ENCODE measurements at regions of chr11 and their contacts with region 1.

Region 1: DNA sequence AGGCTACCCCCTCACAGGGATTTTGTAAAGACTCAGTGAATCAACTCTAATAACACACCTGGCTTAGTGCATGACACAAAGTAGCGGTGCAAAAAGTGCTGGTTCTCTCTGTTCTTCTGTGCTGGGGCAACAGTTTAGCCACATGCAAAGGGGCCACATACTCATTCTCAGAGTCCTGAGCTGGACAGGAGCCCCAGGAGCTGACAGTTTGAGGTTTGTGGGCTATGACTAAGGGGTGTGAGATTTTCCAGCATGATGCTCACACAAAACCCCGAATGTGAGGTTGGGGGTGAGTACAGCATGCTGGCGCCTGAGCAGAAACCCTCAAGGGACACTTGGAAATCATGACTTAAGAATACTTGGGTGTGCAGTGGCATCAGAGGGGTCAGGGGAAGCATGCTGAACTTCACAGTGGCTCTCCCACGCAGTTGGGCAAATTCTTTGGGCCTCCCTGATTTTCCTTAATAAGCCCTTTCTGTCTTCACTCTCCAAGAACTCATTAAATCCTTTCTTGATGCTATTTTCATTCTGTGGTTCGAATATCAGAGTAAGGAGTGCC is 31.0 kb downstream of the TMPRSS5 start:
- DNase-seq: peak; percentile 88
- ATAC-seq: peak; percentile 71
- H3K4me3 ChIP-seq: no peak overlapping the region
- H3K27ac ChIP-seq: no peak overlapping the region
- H3K4me1 ChIP-seq: no peaks in the 10 kb centered on the region; the same call in 1 of the 2 replicates
- H3K27me3 ChIP-seq: peaks cover 15% of the 10 kb centered on the region
- CTCF ChIP-seq: no peak
- POLR2A ChIP-seq: no peak
- RAD21 ChIP-seq: no peak

Region 2: GRCh38 chr11:112150517-112150916 is 1524.6 kb before region 1 on chr11:
- CTCF ChIA-PET with region 1: no interaction called
- POLR2A ChIA-PET with region 1: no interaction called
- dilution Hi-C with region 1: no loop called
- in situ Hi-C with region 1: no loop called
- intact Hi-C with region 1: loop called (anchors 5 kb)
- DNase-seq: no peak
- ATAC-seq: no peak
- H3K4me3 ChIP-seq: no peak overlapping the region
- H3K27ac ChIP-seq: no peak overlapping the region
- H3K4me1 ChIP-seq: no peaks in the 10 kb centered on the region
- H3K27me3 ChIP-seq: no peaks in the 10 kb centered on the region
- CTCF ChIP-seq: no peak
- POLR2A ChIP-seq: no peak
- RAD21 ChIP-seq: no peak

Region 3: GRCh38 chr11:113806406-113806805 is 131.3 kb after region 1 on chr11:
- CTCF ChIA-PET with region 1: no interaction called
- POLR2A ChIA-PET with region 1: no interaction called
- dilution Hi-C with region 1: no loop called
- in situ Hi-C with region 1: no loop called
- intact Hi-C with region 1: no loop called
- DNase-seq: peak; percentile 7
- ATAC-seq: peak; percentile 75
- H3K4me3 ChIP-seq: no peak overlapping the region
- H3K27ac ChIP-seq: no peak overlapping the region
- H3K4me1 ChIP-seq: no peaks in the 10 kb centered on the region
- H3K27me3 ChIP-seq: no peaks in the 10 kb centered on the region
- CTCF ChIP-seq: 0 out of 2 replicates have a peak, but pooled peaks have one; percentile 35
- POLR2A ChIP-seq: no peak
- RAD21 ChIP-seq: 0 out of 2 replicates have a peak, but pooled peaks have one; percentile 16